AG04449 (cell line): ENCODE measurements at regions of chr6 and their contacts with region 1.

Region 1: DNA sequence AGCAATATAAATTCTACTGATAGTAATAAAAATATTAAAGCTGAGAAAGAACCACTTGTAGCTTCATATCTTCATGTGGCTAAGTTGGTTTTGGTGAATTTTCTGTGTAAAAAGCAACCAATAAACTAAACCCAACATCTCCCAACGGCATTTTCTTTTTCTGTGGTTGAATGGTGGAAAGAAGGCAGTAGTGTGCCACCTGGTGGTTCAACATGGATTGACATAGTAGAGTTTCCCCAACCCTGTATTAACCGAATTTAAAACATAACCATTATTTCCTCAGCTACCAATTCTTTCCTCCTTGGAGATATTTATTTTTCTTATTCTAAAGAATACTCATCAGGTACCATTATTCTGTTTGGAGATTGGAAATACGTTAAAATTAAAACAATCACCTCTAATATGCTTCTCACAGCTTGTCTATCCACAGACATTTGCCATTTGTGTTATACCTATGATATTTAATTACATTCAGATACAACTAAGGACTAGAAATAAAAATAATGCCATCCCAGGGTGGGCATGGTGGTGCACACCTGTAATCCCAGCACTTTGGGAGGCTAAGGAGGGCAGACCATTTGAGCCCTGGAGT is 117.1 kb upstream of the EEF1E1 start:
- DNase-seq: no peak
- H3K4me3 ChIP-seq: no peak overlapping the region
- CTCF ChIP-seq: peak; percentile 66

Region 2: DNA sequence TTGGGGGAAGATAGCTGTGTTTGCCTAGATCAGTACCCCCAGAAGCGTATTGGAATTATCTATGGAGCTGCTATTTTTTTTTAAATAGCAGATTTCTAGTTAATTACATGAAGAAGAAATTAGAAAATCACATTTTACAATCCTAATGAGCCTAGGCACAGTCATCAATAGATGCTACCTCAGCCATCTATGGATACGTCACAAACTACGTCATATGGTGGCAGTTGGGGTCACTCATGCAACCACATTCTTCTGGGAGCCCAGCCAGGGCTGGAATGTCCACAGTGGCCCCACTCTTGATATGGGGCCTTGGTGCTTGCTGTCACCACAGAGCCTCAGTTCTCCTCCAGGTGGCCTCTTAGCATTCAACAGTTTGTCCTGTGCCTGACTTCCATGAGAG is 566.5 kb before region 1 on chr6:
- CTCF ChIA-PET with region 1: no interaction called
- POLR2A ChIA-PET with region 1: no interaction called
- DNase-seq: no peak
- H3K4me3 ChIP-seq: no peak overlapping the region
- CTCF ChIP-seq: no peak

Region 3: GRCh38 chr6:8113131-8113654 is 106.3 kb before region 1 on chr6:
- CTCF ChIA-PET with region 1: interaction called, 20 read pairs
- POLR2A ChIA-PET with region 1: no interaction called
- DNase-seq: peak; percentile 23
- H3K4me3 ChIP-seq: no peak overlapping the region
- CTCF ChIP-seq: no peak

Region 4: GRCh38 chr6:8137529-8137939 is 81.9 kb before region 1 on chr6:
- CTCF ChIA-PET with region 1: interaction called, 768 read pairs
- POLR2A ChIA-PET with region 1: no interaction called
- DNase-seq: no peak
- H3K4me3 ChIP-seq: no peak overlapping the region
- CTCF ChIP-seq: no peak

Region 5: GRCh38 chr6:8172530-8172929 is 46.9 kb before region 1 on chr6:
- CTCF ChIA-PET with region 1: interaction called, 15 read pairs
- POLR2A ChIA-PET with region 1: no interaction called
- DNase-seq: no peak
- H3K4me3 ChIP-seq: no peak overlapping the region
- CTCF ChIP-seq: no peak

Region 6: DNA sequence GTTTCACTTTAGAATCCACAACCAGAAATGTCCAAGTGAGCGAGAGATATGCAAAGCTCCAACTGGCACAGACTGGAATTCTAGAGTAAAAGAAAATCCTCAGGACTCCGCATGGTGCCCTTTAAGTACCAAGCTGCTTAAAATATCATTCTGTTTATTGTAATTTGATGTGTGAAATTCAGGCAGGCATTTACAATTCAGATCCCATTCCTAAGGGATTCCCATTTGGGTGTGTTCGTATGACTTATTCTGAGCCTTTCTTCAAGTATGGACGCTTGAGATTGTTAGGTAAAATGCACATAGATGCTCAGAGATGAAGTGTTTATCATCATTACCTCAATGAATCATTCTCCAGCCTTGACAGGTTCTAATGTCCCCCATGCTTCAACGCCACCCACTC is 17.8 kb before region 1 on chr6:
- CTCF ChIA-PET with region 1: interaction called, 57 read pairs
- POLR2A ChIA-PET with region 1: no interaction called
- DNase-seq: no peak
- H3K4me3 ChIP-seq: no peak overlapping the region
- CTCF ChIP-seq: no peak

Region 7: DNA sequence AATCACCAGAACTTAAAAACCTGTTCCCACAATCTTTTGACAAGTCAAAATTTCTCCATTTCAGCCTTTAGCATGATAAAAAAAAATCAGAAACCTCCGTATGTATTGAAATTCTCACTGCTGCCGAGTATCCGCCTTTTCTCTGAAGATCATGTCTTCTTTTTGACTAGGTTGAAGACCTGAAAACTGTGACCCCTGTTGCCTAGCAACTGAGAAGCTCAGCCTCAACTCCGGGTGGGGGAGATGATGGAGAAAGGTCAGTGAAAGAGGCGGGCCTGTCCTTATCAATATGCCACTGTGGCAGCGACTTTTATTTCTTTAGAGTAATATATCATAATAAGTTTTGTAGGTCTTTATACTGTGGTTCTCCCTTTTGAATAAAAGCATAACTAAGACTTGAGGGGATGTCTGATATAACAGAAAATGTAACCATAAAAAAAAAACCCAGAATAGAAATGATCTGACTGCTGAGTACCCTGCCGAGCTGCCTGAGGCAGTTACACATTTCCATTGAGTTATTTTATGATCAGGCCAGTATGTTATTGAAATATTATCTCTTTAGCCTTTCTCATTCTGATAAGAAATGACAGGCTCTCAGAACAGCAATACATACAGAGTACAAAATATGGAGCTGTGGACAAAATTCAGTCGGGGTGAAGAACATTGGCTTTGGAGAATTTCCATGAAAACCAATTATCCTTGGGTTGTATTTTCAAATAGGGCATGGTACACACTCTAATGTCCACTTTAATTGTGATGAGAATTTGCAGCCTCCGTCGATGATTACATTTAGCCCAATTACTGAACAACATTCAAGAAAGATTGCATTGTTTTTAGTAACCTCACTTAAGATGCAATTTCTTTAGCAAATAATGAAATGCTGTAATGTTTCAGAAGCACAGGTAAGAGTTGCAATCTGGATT is 19.6 kb after region 1 on chr6:
- CTCF ChIA-PET with region 1: interaction called, 10 read pairs
- POLR2A ChIA-PET with region 1: no interaction called
- DNase-seq: no peak
- H3K4me3 ChIP-seq: no peak overlapping the region
- CTCF ChIP-seq: no peak

Region 8: GRCh38 chr6:8435160-8435852 is 215.9 kb after region 1 on chr6 and contains the start of gene SLC35B3:
- CTCF ChIA-PET with region 1: no interaction called
- POLR2A ChIA-PET with region 1: no interaction called
- DNase-seq: peak; percentile 33
- H3K4me3 ChIP-seq: peak within 1 kb of the TSS; percentile 97
- CTCF ChIP-seq: no peak